GM10248 (cell line): ENCODE measurements at regions of chr3 and their contacts with region 1.

Region 1: GRCh38 chr3:50550079-50550741 is 17.3 kb downstream of the C3orf18 start:
- DNase-seq: peak; percentile 79
- CTCF ChIP-seq: peak; percentile 75

Region 2: GRCh38 chr3:50121416-50122032 is 428.7 kb before region 1 on chr3:
- CTCF ChIA-PET with region 1: no interaction called
- POLR2A ChIA-PET with region 1: no interaction called
- DNase-seq: peak; percentile 87
- CTCF ChIP-seq: peak; percentile 62

Region 3: DNA sequence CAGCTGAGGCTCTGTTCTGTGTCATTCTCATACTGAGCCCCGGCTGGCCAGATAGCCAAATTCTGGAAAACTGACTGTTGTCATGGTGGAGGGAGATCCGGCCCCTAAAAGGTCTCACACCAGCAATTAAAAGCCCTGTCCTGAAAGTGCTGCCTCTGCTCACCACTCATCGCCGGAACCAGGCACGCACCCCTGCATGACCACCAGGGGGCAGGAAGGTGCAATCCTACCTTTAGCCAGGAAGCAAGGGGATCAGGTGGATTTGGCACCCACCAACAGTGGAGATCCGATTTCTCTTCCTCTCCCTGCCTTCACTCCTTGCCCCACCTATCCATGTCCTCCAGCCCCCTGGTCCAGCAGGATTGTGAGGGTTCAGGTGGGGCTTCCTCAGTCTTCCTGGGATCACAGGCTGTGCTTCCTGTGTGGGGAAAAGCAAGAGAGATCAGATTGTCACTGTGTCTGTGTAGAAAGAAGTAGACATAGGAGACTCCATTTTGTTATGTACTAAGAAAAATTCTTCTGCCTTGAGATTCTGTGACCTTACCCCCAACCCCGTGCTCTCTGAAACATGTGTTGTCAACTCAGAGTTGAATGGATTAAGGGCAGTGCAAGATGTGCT is 30.6 kb before region 1 on chr3:
- CTCF ChIA-PET with region 1: interaction called, 18 read pairs
- POLR2A ChIA-PET with region 1: no interaction called
- DNase-seq: peak; percentile 77
- CTCF ChIP-seq: peak; percentile 98

Region 4: DNA sequence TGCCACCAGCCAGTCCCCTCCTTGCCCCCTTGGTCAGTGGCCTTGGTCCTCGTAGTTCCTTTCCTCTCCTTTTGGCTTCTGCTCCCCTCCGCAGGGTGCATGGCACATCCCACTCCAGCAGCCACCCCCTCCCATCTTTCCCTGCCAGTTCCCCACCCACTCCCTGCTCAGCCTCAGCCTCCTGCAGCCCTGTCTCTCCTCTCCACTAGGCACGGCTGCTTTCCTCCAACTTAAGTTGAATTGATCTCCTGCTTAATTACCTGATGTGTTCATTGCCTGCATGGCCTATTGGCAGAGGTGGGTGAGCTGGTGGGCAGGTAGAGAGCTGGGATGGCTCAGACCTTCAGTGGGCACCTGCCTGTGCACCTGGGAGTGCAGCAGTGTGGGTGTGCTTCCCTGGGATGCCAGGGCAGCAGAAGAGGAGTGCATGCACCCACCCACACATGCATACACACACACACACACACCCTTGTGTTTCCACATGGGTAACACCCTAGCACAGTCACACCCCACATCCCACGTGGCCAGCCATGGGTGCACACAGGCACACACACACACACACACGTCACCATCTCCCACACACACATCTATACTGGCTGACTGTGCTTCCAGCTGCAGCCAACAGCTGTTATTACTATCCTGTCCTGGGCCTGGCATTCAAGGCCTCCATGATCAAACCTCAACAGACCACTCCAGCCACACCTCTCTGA is 13.6 kb before region 1 on chr3:
- CTCF ChIA-PET with region 1: interaction called, 20 read pairs
- POLR2A ChIA-PET with region 1: no interaction called
- DNase-seq: no peak
- CTCF ChIP-seq: no peak